Activated CD8-positive, alpha-beta T cell treated with anti-CD3 and anti-CD28 coated beads, Interleukin-2, amount 10 ng/mL, durations not matched to agents 7 days and 5 days (primary cell): ENCODE measurements at regions of chr17 and their contacts with region 1.

Region 1: GRCh38 chr17:29155227-29155965 is 24.8 kb downstream of the MYO18A start:
- DNase-seq: peak; percentile 74
- ATAC-seq: peak; percentile 91
- H3K4me3 Mint-ChIP-seq: peak overlapping the region; percentile 20
- H3K27ac Mint-ChIP-seq: peak overlapping the region; percentile 84
- H3K4me1 Mint-ChIP-seq: peaks cover 55% of the 10 kb centered on the region
- H3K27me3 Mint-ChIP-seq: no peaks in the 10 kb centered on the region

Region 2: GRCh38 chr17:29140051-29140621 is 15.3 kb before region 1 on chr17:
- CTCF ChIA-PET with region 1: interaction called, 54 read pairs
- POLR2A ChIA-PET with region 1: interaction called, 13 read pairs
- DNase-seq: peak; percentile 95
- ATAC-seq: peak; percentile 76
- H3K4me3 Mint-ChIP-seq: peak overlapping the region; percentile 92
- H3K27ac Mint-ChIP-seq: peak overlapping the region; percentile 98
- H3K4me1 Mint-ChIP-seq: peaks cover 70% of the 10 kb centered on the region
- H3K27me3 Mint-ChIP-seq: no peaks in the 10 kb centered on the region